ENCODE measurements at regions of chr15 and their contacts with region 1.

Region 1: DNA sequence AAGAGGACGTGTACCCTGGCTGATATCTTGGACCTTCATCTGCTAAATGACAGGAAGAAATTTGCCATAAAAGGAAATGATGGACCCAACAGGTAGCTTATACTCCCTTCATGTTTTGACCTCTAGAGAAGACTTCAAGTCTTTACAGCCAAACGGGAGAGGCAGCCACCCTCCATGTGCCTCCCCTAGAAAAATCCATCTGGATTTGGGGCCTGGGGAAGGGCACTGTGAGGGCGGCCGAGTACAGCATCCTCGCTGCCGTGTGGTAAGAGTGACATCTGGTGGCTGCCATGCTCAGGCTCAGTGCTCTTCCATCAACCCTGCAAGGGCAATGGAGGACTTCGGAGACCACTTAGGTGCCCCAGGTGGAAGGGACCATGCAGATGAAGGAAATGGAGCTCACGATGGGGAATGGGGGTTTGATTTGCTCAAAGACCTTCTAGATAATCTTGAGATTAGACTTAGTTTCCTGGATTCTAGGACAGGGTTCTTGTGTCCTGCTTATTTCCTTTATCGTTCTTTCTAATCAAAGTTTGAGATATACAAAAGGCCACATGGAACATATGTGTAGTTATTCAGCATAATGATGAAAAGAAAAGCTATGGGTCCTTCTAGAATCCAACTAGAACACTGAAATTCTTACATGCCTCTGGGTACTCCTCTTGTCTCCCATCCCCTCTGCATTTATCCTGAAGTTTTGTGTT is 44.4 kb downstream of the AQP9 start:
- DNase-seq: no peak

Region 2: GRCh38 chr15:57743424-57743823 is 439.2 kb before region 1 on chr15:
- intact Hi-C with region 1: loop called (anchors 10 kb)
- DNase-seq: no peak

Region 3: DNA sequence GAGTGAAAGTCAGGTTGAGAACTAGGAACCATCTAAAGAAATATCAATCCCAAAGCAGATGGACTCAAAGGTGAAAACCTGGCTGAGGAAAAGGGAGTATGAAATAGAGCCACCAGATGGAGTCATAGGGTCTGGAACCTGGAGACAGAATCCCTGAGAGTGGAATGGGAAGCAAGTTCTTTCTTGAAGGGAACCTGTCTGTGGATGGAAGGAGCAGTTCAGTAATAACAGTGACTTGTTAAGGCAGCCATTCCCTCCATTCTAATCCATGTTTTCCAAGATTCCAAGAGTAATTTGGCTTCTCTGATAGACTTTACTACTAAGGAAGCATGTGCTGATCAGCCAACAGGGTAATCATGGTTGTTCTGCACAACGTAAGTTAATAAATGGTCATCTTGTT is 66.9 kb before region 1 on chr15:
- intact Hi-C with region 1: loop called (anchors 10 kb)
- DNase-seq: no peak

Region 4: DNA sequence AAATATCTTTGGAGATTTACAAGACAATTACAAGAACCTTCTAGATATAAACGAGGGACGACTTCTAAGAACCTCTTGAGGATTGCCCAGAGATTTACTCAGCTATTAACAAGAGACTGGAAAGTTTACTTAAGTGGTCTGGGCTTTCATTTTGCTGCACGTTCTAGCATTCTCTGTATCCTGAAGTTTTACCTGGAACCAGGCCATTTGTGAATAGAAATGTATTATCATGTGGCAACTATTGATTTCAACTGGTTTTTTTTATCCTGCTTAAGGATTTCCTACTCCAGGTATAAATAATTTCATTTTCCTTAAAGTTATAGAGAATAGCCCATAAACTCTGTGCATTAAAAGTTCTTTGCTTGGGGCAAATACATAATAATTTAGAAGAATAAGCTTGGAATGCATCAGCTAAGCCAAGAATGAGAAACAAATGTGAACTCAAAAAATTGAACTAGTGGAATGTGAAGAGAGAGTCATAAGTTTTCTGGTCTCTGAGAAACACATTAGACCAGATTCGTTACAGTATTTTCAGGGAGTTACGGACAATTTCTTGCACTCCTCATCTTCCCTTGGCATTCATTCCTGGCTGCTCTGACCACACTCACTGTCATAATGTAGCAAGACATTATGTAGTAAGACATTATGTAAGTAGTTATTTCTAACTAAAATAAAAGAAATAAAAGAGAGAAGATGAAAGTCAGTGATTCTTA is 43.2 kb before region 1 on chr15:
- intact Hi-C with region 1: no loop called
- DNase-seq: no peak

Region 5: GRCh38 chr15:58269455-58270414 is 87.1 kb after region 1 on chr15:
- intact Hi-C with region 1: no loop called
- DNase-seq: no peak

Region 6: DNA sequence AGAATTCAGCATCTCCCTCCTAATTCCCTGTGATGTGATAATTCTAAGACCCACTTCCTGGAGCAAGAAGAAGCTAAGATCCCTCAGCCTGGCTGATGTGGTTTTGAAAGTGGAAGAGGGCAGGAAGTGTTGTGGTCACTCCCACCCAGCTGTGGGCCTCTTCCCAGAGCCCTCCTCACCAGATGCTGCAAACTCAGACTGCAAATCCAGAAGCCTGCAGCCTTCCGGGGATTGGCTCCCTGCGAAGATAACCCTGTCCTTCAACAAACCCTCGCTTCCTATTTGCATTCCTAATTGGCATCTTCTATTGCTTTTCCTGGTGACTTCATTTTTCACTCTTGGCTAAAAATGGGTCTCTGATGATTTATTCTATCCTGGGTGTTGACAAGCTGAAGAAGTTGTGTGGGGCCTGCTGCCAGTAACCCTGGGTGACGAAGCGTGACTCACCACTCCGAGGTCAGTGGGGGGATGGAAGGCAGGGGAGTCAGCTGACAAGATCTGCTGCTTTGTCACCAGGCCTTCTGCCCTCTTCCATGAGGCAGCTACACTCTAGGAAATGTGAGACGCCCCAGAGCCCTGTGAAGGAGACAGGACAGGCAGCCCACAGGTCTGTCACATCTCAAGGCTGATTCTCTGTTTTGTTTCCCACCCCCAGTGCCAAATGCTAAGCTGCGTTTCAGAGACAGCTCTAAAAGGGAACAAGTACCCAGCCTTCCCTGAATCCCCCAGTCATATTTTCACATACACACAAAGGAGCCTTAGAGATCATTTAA is 149.5 kb after region 1 on chr15:
- intact Hi-C with region 1: no loop called
- DNase-seq: peak; percentile 98

Region 7: DNA sequence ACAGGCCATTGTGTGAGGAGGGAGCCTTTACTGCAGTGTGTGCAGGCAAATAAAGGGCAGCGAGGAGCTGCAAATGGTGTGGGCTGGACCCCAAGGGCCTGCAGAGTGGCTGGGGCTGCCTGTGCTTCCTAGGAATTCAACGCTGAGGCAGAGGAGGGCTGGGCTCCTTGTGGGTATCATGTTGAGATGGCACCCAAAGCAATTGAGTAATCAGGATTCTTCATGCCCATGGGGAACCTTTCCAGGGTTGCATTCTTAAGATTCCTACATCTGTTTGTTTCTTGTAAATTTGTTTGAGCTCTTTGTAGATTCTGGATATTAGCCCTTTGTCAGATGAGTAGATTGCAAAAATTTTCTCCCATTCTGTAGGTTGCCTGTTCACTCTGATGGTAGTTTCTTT is 163.8 kb after region 1 on chr15:
- intact Hi-C with region 1: no loop called
- DNase-seq: no peak

Measured in cardiac septum (tissue), 1 donor.